Activated CD4-positive, alpha-beta memory T cell treated with anti-CD3 and anti-CD28 coated beads, Interleukin-2, amount 10 ng/mL, durations not matched to agents 7 days and 5 days (primary cell): ENCODE measurements at regions of chr3 and their contacts with region 1.

Region 1: GRCh38 chr3:48685602-48686511 is at the start of gene NCKIPSD:
- DNase-seq: peak; percentile 91
- H3K4me3 Mint-ChIP-seq: peak within 1 kb of the TSS; percentile 90
- H3K27ac Mint-ChIP-seq: peak within 1 kb of the TSS; percentile 80
- H3K4me1 Mint-ChIP-seq: peaks cover 31% of the 10 kb centered on the region
- H3K27me3 Mint-ChIP-seq: no peaks in the 10 kb centered on the region
- total RNA-seq, gene NCKIPSD: 33.4 to 37.2 TPM

Region 2: GRCh38 chr3:48663415-48664312 is 22.2 kb before region 1 on chr3:
- CTCF ChIA-PET with region 1: interaction called, 13 read pairs
- POLR2A ChIA-PET with region 1: interaction called, 7 read pairs
- DNase-seq: peak; percentile 97
- H3K4me3 Mint-ChIP-seq: peak overlapping the region; percentile 81
- H3K27ac Mint-ChIP-seq: peak overlapping the region; percentile 78
- H3K4me1 Mint-ChIP-seq: peaks cover 23% of the 10 kb centered on the region
- H3K27me3 Mint-ChIP-seq: peaks cover 4% of the 10 kb centered on the region

Region 3: DNA sequence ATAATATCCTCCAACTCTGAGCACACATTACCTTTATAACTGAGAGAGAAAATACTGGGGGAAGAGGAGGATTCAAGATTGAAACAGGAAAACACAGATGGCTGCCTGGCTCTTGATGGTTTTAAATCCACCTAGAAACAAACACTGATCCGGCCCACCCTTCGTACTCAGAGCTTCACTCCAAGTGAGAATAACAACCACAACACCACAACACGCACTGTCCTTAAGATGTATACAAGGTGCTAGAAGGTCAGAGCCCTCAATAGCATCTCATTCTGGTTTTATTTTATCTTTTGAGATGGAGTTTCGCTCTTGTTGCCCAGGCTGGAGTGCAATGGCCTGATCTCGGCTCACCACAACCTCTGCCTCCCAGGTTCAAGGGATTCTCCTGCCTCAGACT is 21.3 kb after region 1 on chr3:
- CTCF ChIA-PET with region 1: interaction called, 11 read pairs
- POLR2A ChIA-PET with region 1: no interaction called
- DNase-seq: no peak
- H3K4me3 Mint-ChIP-seq: no peak overlapping the region
- H3K27ac Mint-ChIP-seq: no peak overlapping the region
- H3K4me1 Mint-ChIP-seq: peaks cover 27% of the 10 kb centered on the region
- H3K27me3 Mint-ChIP-seq: no peaks in the 10 kb centered on the region

Region 4: GRCh38 chr3:48770187-48770502 is 84.3 kb after region 1 on chr3:
- CTCF ChIA-PET with region 1: no interaction called
- POLR2A ChIA-PET with region 1: no interaction called
- DNase-seq: no peak
- H3K4me3 Mint-ChIP-seq: no peak overlapping the region
- H3K27ac Mint-ChIP-seq: no peak overlapping the region
- H3K4me1 Mint-ChIP-seq: no peaks in the 10 kb centered on the region
- H3K27me3 Mint-ChIP-seq: no peaks in the 10 kb centered on the region

Region 5: DNA sequence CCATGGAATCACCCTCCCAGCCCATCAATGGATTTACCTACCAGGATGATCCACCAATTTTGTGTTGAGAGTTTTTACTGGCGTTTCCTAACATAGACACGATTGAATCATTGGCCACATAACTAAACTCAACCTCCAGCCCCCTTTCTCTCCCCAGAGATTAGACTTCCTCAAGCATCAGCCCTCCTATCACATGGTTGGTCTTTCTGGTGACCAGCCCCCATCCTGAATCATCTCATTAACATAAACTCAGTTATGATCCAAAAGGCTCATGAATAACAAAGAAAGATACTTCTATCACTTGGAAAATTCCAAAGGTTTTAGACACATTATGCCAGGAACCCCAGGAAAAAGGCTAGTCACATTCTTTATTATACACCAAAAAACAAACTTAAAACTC is 140.6 kb after region 1 on chr3:
- CTCF ChIA-PET with region 1: no interaction called
- POLR2A ChIA-PET with region 1: no interaction called
- DNase-seq: no peak
- H3K4me3 Mint-ChIP-seq: no peak overlapping the region
- H3K27ac Mint-ChIP-seq: no peak overlapping the region
- H3K4me1 Mint-ChIP-seq: no peaks in the 10 kb centered on the region
- H3K27me3 Mint-ChIP-seq: no peaks in the 10 kb centered on the region